Right ventricle myocardium inferior (tissue), 1 donor: ENCODE measurements at regions of chr13 and their contacts with region 1.

Region 1: GRCh38 chr13:58048473-58049069 is 417.0 kb downstream of the PCDH17 start:
- DNase-seq: no peak
- ATAC-seq: no peak

Region 2: DNA sequence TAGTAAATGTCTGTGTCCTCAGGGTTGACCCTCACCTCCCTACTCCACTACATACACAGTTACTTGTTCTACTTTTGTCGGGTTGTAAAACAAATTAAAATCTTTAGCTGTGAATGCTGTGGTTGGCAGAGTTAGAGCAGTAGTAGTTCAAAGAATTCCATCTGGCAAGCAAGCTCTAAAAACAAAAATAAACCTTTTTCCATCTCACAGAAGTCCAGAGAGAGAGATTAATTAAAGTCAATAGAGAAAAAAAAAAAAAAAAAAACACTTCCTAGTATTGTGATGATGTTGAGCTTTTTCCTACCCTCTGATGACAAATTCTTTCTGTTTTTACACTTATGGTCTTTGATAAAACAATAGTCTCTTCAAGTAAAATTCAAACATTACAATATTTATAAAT is 78.6 kb before region 1 on chr13:
- intact Hi-C with region 1: no loop called
- DNase-seq: no peak
- ATAC-seq: no peak

Region 3: GRCh38 chr13:58239774-58240268 is 191.2 kb after region 1 on chr13:
- intact Hi-C with region 1: loop called (anchors 10 kb)
- DNase-seq: peak; percentile 42
- ATAC-seq: peak; percentile 67